Endothelial cell of umbilical vein (primary cell): ENCODE measurements at regions of chr7 and their contacts with region 1.

Region 1: GRCh38 chr7:156892821-156893706 is at the start of gene LMBR1:
- DNase-seq: peak; percentile 96
- H3K4me3 ChIP-seq: peak within 1 kb of the TSS; percentile 90 to 94 (median 91)
- H3K27ac ChIP-seq: peak within 1 kb of the TSS; percentile 83
- H3K4me1 ChIP-seq: peaks cover 19% of the 10 kb centered on the region
- H3K27me3 ChIP-seq: no peaks in the 10 kb centered on the region
- CTCF ChIP-seq: peak; percentile 35 to 66
- POLR2A ChIP-seq: peak; percentile 79
- total RNA-seq, gene LMBR1: 57.7 and 72.9 TPM in 2 replicates

Region 2: DNA sequence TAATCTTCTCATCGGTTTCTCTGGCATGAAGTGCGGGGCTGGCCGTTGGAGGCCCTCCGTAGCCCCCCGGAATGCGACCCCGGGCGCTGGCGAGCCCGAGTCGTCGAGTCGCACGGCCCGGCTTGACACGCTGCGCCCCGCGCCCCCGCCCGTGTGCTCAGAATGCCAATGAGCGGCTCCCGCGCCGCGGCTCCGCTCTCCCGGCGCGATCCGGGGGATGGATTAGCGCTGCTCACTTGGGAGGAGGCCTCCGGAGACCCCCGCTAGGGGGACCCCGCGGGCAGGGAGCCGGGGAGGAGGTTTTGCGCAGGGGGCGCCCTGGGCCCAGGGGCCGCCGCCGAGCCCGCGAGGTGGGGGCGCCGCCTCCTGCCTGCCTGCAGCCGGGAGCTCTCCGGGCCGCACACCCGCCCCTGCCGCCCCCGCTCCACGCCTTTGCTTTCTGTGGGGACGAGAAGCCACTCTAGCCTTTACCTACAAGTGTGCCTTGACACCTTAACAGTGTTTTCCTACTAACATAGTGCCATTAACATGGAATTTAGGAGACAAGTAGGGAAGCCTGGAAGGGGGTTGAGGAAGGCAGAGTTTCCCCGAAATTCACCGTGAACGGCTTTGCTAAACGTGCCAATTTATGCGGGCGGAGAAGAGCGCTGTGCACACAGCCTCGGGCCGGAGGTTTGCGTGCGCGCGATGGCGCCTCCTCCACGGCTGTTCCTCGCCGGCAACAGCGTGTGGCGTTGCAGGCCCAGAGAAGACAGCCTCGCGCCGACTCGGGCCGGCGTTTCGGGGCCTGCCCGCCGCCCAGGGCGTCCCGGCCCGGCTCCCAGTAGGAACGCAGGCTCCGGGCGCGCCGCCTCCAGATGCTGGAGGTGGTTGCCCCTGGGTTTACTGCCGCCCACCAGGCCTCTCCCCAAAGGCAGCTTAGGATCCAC is 1087.9 kb before region 1 on chr7:
- CTCF ChIA-PET with region 1: no interaction called
- POLR2A ChIA-PET with region 1: no interaction called
- dilution Hi-C with region 1: no loop called
- intact Hi-C with region 1: loop called (anchors 5 kb)
- DNase-seq: peak; percentile 69
- H3K4me3 ChIP-seq: peak overlapping the region; percentile 12 to 56 (median 31)
- H3K27ac ChIP-seq: no peak overlapping the region
- H3K4me1 ChIP-seq: peaks cover 29% of the 10 kb centered on the region
- H3K27me3 ChIP-seq: peaks cover 14 to 58% of the 10 kb centered on the region in 2 experiments
- CTCF ChIP-seq: peak; percentile 50 to 80
- POLR2A ChIP-seq: no peak

Region 3: DNA sequence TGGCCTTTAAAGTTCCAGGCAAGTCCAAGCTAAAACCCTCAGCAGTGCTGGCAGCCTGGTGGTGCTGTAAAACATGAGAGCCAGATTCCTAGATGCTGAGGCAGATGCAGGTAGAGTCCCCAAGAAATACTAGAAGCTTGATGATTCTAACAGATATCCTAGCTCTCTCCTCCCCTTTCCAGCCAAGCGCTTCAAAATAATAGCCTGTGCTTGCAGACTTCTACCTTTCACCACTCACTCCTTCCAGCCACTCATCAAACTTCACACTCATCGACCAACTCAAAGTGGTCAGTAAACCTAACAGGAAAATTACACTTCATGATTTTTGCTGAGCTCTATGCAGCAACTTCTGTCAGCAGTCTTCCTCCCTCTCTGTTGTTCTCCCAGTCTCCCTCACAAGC is 50.3 kb before region 1 on chr7:
- CTCF ChIA-PET with region 1: no interaction called
- POLR2A ChIA-PET with region 1: no interaction called
- dilution Hi-C with region 1: no loop called
- intact Hi-C with region 1: loop called (anchors 5 kb)
- DNase-seq: no peak
- H3K4me3 ChIP-seq: no peak overlapping the region
- H3K27ac ChIP-seq: no peak overlapping the region
- H3K4me1 ChIP-seq: no peaks in the 10 kb centered on the region
- H3K27me3 ChIP-seq: no peaks in the 10 kb centered on the region
- CTCF ChIP-seq: no peak
- POLR2A ChIP-seq: no peak

Region 4: GRCh38 chr7:156903232-156903909 is 10.3 kb after region 1 on chr7:
- CTCF ChIA-PET with region 1: interaction called, 11 read pairs
- POLR2A ChIA-PET with region 1: no interaction called
- dilution Hi-C with region 1: no loop called
- intact Hi-C with region 1: loop called (anchors 1 kb)
- DNase-seq: peak; percentile 81
- H3K4me3 ChIP-seq: no peak overlapping the region
- H3K27ac ChIP-seq: peak overlapping the region; percentile 80
- H3K4me1 ChIP-seq: peaks cover 14% of the 10 kb centered on the region
- H3K27me3 ChIP-seq: no peaks in the 10 kb centered on the region
- CTCF ChIP-seq: no peak
- POLR2A ChIP-seq: peak; percentile 34

Region 5: DNA sequence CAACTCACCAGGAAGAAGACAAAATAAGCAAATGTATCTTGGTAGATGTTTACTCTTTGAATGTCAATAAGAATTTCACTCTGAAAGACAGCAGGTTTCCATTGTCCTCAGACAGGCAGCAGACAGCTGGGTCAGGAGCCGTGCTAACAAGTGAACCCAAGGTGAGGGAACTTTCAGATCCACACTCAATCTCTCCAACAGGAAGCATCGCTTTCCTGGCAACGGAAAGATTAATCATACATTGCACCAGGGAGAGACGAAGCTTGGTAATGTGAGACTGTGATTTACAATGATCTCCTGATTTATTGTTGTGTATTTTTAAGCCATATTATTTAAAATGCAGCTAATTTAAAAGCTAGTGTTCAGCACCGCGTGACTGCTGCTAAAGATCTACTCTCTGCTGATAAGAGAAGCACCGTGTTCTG is 38.9 kb after region 1 on chr7:
- CTCF ChIA-PET with region 1: interaction called, 7 read pairs
- POLR2A ChIA-PET with region 1: interaction called, 4 read pairs
- dilution Hi-C with region 1: no loop called
- intact Hi-C with region 1: loop called (anchors 1 kb)
- DNase-seq: peak; percentile 97
- H3K4me3 ChIP-seq: peak overlapping the region in 1 of 3 experiments; percentile 24
- H3K27ac ChIP-seq: peak overlapping the region; percentile 82
- H3K4me1 ChIP-seq: peaks cover 34% of the 10 kb centered on the region
- H3K27me3 ChIP-seq: no peaks in the 10 kb centered on the region
- CTCF ChIP-seq: no peak
- POLR2A ChIP-seq: peak; percentile 27

Region 6: DNA sequence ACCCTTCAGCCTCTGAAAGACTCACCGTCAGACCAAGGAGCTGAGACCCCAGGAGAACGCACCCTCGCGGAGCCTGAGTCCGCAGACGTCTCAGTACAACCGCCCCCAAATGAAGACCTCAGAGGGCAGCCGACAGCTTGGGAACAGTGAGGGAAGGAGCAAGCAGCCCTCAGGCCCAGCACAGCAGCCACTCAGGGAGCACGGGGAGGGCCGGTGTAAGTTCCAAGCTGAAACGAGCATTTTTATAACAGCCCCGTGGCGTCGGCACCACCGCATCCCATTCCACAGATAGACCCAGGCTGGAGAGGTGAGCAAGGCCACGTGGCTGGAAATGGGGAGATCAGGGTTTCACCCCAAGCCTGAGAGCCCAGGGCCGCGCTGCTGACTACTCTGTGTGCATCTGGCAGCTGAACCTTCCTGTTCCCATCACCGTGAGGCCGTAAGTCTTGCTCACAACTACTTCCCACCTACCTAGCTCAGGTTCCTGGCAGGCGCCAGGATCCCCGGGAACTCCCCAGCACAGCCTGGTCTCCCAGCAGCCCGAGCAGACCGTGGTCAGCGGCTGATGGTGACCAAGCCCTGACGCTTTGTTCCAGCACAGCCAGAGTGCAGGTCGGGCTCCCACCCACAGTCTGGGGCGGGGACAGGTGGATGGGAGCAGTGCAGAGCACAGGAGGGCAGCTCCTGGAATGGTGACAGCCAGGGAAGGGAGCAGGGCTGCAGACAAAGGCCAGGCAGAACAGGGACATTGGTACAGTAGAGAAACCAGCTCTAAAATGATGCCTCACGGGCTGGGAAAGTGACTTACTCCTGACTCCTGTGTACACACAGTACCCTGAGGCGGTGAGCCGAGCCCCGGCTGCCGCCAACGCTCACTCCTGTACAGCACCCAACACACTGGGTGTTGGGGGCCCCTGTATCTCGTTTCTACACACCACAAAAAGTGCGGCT is 50.3 kb after region 1 on chr7:
- CTCF ChIA-PET with region 1: interaction called, 11 read pairs
- POLR2A ChIA-PET with region 1: no interaction called
- dilution Hi-C with region 1: no loop called
- intact Hi-C with region 1: no loop called
- DNase-seq: no peak
- H3K4me3 ChIP-seq: no peak overlapping the region
- H3K27ac ChIP-seq: no peak overlapping the region
- H3K4me1 ChIP-seq: peaks cover 2% of the 10 kb centered on the region
- H3K27me3 ChIP-seq: peaks cover 21 to 22% of the 10 kb centered on the region in 2 experiments
- CTCF ChIP-seq: no peak
- POLR2A ChIP-seq: no peak

Region 7: DNA sequence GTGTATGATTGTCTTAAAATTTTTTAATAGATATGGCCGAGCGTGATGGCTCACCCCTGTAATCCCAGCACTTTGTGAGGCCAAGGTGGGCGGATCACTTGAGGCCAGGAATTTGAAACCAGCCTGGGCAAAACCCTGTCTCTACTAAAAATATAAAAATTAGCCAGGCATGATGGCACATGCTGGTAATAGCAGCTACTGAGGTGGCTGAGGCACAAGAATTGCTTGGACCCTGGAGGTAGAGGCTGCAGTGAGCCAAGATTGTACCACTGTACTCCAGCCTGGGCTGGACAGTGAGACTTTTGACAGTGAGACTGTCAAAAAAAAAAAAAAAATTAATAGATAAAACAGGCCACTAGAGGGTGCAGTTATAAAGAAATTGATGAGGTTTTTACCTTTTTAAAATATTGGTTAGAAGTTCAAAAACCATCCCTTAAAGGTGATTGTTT is 76.9 kb after region 1 on chr7:
- CTCF ChIA-PET with region 1: no interaction called
- POLR2A ChIA-PET with region 1: no interaction called
- dilution Hi-C with region 1: no loop called
- intact Hi-C with region 1: no loop called
- DNase-seq: peak; percentile 15
- H3K4me3 ChIP-seq: no peak overlapping the region
- H3K27ac ChIP-seq: no peak overlapping the region
- H3K4me1 ChIP-seq: no peaks in the 10 kb centered on the region
- H3K27me3 ChIP-seq: no peaks in the 10 kb centered on the region
- CTCF ChIP-seq: peak; percentile 20 to 22
- POLR2A ChIP-seq: no peak

Region 8: DNA sequence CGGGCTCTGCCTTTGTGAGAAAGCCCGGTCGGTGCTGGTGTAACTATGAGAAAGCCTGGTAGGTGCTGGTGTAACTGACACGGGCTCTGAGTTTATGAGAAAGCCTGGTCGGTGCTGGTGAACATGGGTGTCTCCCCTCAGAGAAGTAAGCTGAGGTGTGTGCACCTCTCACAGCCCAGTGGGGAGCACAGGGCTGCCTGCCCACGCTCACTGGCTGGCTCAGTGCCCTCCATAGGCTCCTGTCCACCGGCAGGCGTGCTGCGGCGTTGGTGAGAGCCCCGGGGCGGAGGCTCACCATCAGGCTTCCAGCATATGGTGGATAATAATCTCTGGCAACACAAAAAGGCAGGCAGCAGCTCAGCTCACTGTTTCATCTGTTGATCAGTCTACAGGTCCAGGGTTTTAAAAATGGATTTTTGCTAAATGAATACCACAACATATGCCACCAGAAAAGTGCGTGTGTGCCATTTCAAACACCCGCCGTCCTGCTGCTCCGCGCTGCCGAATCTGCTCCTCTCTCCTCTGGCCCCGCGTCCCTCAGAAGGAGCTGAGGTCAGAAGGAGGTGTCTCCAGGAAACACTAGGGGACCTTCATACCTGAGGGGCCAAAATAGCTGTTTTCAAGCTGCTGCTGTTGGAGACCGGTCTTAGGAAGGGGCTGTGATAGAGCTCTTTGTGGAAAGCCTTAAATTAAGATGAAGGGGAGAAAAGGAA is 809.4 kb after region 1 on chr7:
- CTCF ChIA-PET with region 1: no interaction called
- POLR2A ChIA-PET with region 1: no interaction called
- dilution Hi-C with region 1: no loop called
- intact Hi-C with region 1: no loop called
- DNase-seq: no peak
- H3K4me3 ChIP-seq: no peak overlapping the region
- H3K27ac ChIP-seq: no peak overlapping the region
- H3K4me1 ChIP-seq: no peaks in the 10 kb centered on the region
- H3K27me3 ChIP-seq: no peaks in the 10 kb centered on the region
- CTCF ChIP-seq: no peak
- POLR2A ChIP-seq: no peak